ENCODE measurements at regions of chr20 and their contacts with region 1.

Region 1: DNA sequence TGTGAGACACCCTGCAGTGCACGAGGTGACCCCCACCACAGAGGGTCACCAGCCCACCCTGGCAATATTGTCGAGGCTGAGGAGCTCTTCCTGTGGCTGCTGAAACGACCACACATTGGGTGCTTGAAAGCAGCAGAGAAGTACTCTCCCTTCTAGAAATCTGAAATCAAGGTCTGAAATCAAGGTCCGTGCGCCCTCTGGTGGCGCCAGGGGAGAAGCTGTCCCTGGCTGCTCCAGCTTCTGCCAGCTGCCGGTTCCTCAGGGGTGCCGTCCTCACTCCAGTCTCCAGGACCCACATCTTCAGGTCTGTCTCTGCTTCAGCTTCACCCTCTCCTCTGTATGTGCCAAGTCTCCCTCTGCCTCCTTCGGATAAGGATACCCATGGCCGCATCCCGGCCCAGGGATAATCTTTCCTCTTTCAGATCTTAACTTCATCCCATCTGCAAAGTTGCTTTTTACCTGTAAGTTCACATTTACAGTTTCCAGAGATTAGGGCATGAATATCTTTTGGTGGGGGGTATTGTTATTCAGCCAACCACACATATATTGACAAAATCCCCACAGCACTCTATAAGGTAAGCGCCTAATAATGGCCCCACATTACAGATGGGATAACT is 108.3 kb upstream of the PHACTR3 start:
- DNase-seq: peak; percentile 56
- H3K4me3 ChIP-seq: no peak overlapping the region
- H3K27ac ChIP-seq: no peak overlapping the region
- H3K4me1 ChIP-seq: no peaks in the 10 kb centered on the region
- H3K27me3 ChIP-seq: no peaks in the 10 kb centered on the region
- CTCF ChIP-seq: peak; percentile 82 to 90
- POLR2A ChIP-seq: no peak

Region 2: GRCh38 chr20:59055295-59055694 is 440.7 kb before region 1 on chr20:
- CTCF ChIA-PET with region 1: interaction called, 14 read pairs
- POLR2A ChIA-PET with region 1: no interaction called
- dilution Hi-C with region 1: no loop called
- intact Hi-C with region 1: loop called (anchors 10 kb)
- DNase-seq: peak; percentile 51
- H3K4me3 ChIP-seq: no peak overlapping the region
- H3K27ac ChIP-seq: no peak overlapping the region
- H3K4me1 ChIP-seq: no peaks in the 10 kb centered on the region
- H3K27me3 ChIP-seq: peaks cover 15 to 30% of the 10 kb centered on the region in 2 experiments
- CTCF ChIP-seq: peak in 1 of 2 donors; percentile 24
- POLR2A ChIP-seq: no peak

Region 3: DNA sequence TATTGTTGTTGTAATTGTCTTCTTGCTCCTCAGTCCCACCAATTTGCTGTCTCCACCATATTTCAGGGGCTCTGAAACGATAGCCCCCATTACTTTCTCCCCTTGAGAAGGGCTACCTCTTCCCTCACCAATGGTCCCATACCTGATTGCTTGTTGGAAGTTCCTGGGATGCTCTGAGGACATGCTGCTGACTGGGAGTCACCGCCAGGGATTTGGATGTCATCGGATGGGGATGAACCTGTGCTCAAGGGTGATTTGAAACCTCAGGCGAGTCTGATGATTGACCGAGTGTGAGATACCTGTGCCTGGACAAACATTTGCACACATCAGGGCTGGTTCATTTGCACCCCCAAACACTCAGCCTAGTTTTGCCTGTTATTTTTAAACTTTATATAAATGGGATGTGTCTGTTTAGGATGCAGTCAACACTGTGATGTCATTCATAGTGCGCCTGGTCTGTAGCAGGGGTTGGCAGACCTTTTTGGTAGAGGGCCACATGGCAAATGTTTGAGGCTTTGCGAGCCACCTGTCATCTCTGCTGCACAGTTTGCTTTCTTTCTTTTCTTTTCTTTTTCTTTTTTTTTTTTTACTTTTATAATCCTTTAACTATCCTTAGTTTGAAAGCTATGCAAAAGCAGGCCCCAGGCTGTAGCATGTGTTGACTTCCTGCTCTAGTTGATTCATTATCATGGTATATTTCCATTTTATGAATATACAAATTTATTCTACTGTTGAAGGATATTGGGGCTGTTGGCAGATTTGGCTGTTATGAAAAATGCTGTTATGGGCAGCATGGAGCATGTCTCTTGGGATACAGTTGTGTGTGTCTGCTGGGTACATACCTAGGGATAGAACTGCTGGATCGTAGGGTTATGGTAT is 10.2 kb before region 1 on chr20:
- CTCF ChIA-PET with region 1: interaction called, 11 read pairs
- POLR2A ChIA-PET with region 1: no interaction called
- dilution Hi-C with region 1: no loop called
- intact Hi-C with region 1: no loop called
- DNase-seq: no peak
- H3K4me3 ChIP-seq: no peak overlapping the region
- H3K27ac ChIP-seq: no peak overlapping the region
- H3K4me1 ChIP-seq: no peaks in the 10 kb centered on the region
- H3K27me3 ChIP-seq: no peaks in the 10 kb centered on the region
- CTCF ChIP-seq: no peak
- POLR2A ChIP-seq: no peak

Region 4: GRCh38 chr20:59515014-59515905 is 19.3 kb after region 1 on chr20:
- CTCF ChIA-PET with region 1: interaction called, 16 read pairs
- POLR2A ChIA-PET with region 1: no interaction called
- dilution Hi-C with region 1: no loop called
- intact Hi-C with region 1: no loop called
- DNase-seq: peak; percentile 61
- H3K4me3 ChIP-seq: no peak overlapping the region
- H3K27ac ChIP-seq: no peak overlapping the region
- H3K4me1 ChIP-seq: no peaks in the 10 kb centered on the region
- H3K27me3 ChIP-seq: no peaks in the 10 kb centered on the region
- CTCF ChIP-seq: peak; percentile 70 to 87
- POLR2A ChIP-seq: no peak

Measured in endothelial cell of umbilical vein (primary cell).